ENCODE measurements at regions of chr6 and their contacts with region 1.

Region 1: DNA sequence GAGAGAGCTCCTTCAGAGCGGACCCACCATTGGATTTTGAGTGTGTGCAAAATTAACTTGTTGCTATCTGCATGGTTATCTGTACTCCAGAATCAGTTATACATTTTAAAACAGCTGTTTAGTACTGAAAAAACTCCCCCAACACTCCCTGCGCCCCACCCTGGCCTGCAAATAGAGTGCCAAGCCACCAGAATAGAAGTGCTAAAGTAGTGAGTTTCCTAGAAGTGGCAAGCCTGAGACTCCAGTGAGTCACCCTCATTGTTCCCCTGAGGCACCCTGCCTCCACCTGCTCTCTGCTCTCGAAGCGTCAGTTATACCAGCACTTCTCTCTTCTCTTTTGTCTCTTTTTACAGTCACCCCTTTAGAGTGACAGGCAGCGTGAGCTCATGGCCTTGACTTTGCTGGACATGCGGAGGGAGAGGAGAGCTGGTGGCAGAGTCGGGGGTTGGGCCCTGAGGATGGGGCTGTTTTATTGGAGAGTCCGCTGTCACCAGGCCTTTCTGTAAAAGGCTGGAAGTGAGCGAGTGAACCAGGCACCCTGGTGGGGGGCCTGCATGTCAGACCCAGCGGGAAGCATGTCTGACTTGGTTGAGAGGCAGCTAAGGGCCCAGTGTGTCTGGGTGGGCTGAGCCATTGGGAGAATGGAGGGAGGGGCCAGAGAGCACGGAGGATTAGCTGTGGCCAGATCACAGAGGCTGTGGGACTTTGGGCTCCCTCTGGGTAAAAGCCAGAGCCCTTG is 10.4 kb downstream of the IGF2R start:
- DNase-seq: peak; percentile 82
- H3K4me3 Mint-ChIP-seq: peak overlapping the region; percentile 73
- H3K27ac Mint-ChIP-seq: peak overlapping the region; percentile 98
- H3K4me1 Mint-ChIP-seq: peaks cover 95% of the 10 kb centered on the region
- H3K27me3 Mint-ChIP-seq: no peaks in the 10 kb centered on the region

Region 2: DNA sequence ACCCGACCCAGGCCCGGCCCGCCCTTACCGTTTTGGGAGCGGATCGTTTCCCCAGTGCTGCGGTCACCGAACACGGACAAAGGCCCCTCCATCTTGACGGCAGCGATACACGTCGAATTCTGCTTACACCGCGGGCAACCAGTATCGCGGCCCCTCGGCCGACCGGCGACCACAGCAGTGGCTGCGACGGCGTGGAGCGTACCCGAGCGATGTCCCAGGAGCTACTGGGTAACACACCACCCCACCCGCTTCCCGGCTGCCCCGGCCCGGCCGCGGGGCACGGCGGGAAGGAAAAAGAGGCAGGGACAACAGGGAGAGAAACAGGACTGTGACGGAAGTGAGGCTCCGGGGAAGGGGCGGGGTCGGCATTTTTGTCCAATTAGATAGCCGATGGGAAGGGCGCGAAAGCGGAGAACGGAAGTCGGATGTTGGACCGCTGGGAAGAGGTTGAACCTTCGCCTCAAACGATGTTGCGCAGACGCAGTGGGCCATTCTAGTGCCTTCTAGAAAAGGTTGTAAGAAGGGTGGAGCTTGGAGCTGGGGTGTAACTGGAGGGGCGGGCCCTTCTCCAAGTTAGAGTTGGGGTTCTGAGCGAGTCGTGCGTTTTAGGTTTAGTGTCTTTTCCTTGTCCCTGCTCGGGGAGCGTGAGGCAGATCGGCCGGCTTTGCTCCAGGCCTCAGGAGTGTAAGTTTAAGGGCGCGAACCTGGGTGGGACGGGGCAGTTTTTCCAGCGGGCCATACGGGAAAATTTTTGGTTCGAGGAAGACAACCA is 189.7 kb before region 1 on chr6 and contains the start of gene TCP1:
- CTCF ChIA-PET with region 1: no interaction called
- POLR2A ChIA-PET with region 1: interaction called, 5 read pairs
- intact Hi-C with region 1: loop called (anchors 5 kb)
- DNase-seq: peak; percentile 100
- H3K4me3 Mint-ChIP-seq: peak within 1 kb of the TSS; percentile 96
- H3K27ac Mint-ChIP-seq: peak within 1 kb of the TSS; percentile 98
- H3K4me1 Mint-ChIP-seq: peaks cover 64% of the 10 kb centered on the region
- H3K27me3 Mint-ChIP-seq: no peaks in the 10 kb centered on the region
- total RNA-seq, gene TCP1: 429 to 438 TPM

Region 3: GRCh38 chr6:159989492-159990480 is 10.5 kb after region 1 on chr6:
- CTCF ChIA-PET with region 1: interaction called, 3 read pairs
- POLR2A ChIA-PET with region 1: interaction called, 9 read pairs
- intact Hi-C with region 1: loop called (anchors 1 kb)
- DNase-seq: no peak
- H3K4me3 Mint-ChIP-seq: no peak overlapping the region
- H3K27ac Mint-ChIP-seq: peak overlapping the region; percentile 71
- H3K4me1 Mint-ChIP-seq: peaks cover 72% of the 10 kb centered on the region
- H3K27me3 Mint-ChIP-seq: no peaks in the 10 kb centered on the region

Region 4: GRCh38 chr6:160015778-160016684 is 36.7 kb after region 1 on chr6:
- CTCF ChIA-PET with region 1: interaction called, 3 read pairs
- POLR2A ChIA-PET with region 1: interaction called, 8 read pairs
- intact Hi-C with region 1: loop called (anchors 1 kb)
- DNase-seq: peak; percentile 76
- H3K4me3 Mint-ChIP-seq: peak overlapping the region; percentile 36
- H3K27ac Mint-ChIP-seq: peak overlapping the region; percentile 80
- H3K4me1 Mint-ChIP-seq: peaks cover 66% of the 10 kb centered on the region
- H3K27me3 Mint-ChIP-seq: no peaks in the 10 kb centered on the region

Region 5: GRCh38 chr6:160042788-160043301 is 63.5 kb after region 1 on chr6:
- CTCF ChIA-PET with region 1: no interaction called
- POLR2A ChIA-PET with region 1: no interaction called
- intact Hi-C with region 1: no loop called
- DNase-seq: no peak
- H3K4me3 Mint-ChIP-seq: no peak overlapping the region
- H3K27ac Mint-ChIP-seq: no peak overlapping the region
- H3K4me1 Mint-ChIP-seq: peaks cover 5% of the 10 kb centered on the region
- H3K27me3 Mint-ChIP-seq: no peaks in the 10 kb centered on the region

Region 6: DNA sequence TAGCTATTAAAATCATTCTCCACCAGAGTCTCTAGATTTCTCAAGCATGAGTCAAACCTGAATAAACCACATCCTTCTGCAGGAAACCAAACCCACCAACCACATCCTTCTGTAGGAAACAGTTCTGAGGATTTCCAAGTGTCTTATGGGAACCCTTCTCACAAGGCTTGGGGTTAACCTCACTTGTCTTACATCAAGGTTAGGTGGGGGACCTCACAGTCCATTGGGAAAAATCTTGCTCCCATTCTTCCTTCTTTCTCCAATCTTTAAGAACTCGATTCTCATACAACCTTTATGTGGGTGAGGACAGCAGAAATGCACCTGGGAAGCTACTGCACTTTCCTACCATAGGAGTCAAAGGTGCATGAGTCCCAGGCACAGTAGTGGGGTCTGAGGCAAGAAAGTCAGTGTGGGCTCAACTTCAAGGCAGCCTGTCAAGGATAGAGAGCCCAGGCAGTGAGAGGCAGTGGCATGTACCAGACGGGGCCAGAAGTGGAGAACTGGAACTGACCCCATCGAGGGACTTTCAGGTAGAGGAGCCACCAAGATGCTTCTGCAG is 483.3 kb after region 1 on chr6:
- CTCF ChIA-PET with region 1: no interaction called
- POLR2A ChIA-PET with region 1: no interaction called
- intact Hi-C with region 1: loop called (anchors 5 kb)
- DNase-seq: peak; percentile 64
- H3K4me3 Mint-ChIP-seq: peak overlapping the region; percentile 42
- H3K27ac Mint-ChIP-seq: peak overlapping the region; percentile 68
- H3K4me1 Mint-ChIP-seq: peaks cover 72% of the 10 kb centered on the region
- H3K27me3 Mint-ChIP-seq: peaks cover 14% of the 10 kb centered on the region